ENCODE measurements at regions of chr16 and their contacts with region 1.

Region 1: DNA sequence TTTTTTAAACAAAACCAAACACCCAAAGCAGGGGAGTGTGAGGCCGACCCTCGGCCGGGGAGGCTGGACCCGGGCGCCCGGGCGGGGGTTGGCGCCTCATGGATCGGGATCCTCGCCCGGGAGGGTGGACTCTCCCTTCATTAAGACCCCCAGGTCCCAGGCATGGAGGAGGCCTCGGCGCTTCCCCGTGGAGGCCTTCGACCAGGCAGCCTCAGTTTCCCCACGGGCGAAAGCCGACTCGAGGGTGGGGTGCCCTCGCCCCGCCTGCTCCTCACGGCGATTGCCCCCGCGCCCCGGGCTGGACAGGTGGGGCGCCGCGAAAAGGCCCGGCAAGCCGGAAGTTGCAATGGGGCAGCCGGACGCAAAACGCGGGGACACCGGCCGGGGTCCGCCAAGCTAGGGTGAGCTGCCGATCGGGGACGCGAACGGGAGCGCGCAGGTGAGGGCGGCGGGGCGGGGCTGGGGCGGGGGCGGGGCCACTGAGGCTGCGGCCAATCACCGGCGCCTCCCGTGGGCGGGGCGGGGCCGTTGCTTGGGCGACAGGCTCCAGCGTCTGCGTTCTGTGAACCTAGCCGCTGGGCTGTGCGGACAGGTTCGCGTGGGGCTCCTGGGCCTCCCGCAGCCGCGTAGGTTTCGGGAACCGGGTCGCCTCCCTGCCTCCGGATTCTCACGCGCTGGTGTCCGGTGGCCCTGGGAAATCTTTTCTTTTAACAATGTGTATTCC is 6.0 kb upstream of the ZNF205 start:
- DNase-seq: peak; percentile 88
- H3K4me3 Mint-ChIP-seq: peak overlapping the region; percentile 85
- H3K27ac Mint-ChIP-seq: peak overlapping the region; percentile 95
- H3K4me1 Mint-ChIP-seq: peaks cover 22% of the 10 kb centered on the region
- H3K27me3 Mint-ChIP-seq: no peaks in the 10 kb centered on the region

Region 2: DNA sequence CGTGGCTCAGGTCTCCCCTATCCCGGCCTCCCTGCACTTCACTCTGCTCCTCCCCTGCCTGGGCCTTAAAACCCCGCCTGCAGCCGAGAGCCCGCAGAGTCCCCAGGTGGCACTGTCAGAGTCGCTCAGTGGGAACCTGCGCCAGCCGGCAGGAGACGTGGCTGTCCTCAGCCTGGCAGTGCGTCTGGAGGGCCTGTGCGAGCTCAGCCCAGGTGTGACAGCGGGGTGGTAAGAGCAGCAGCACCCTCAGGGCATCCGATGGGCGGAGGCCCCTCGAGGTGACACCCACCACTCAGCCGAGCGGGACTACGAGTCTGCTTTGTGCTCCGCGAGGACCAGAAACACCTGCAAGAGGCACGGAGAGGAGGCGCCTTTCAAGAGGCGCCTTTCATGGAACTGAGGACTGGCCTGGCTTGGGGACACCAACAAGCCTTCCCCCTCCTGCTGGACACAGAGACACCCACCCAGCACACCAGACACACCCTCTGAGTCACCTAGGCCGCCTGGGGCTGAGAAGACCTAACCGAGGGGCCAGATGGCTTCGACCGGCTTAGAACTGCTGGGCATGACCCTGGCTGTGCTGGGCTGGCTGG is 93.4 kb before region 1 on chr16 and contains the start of gene CLDN9:
- intact Hi-C with region 1: no loop called
- DNase-seq: no peak
- H3K4me3 Mint-ChIP-seq: no peak within 1 kb of the TSS
- H3K27ac Mint-ChIP-seq: no peak within 1 kb of the TSS
- H3K4me1 Mint-ChIP-seq: peaks cover 10% of the 10 kb centered on the region
- H3K27me3 Mint-ChIP-seq: peaks cover 11% of the 10 kb centered on the region
- total RNA-seq, gene CLDN9: not detected in 2 replicates

Region 3: GRCh38 chr16:3123986-3124886 is 17.9 kb after region 1 on chr16:
- intact Hi-C with region 1: loop called (anchors 1 kb)
- DNase-seq: peak; percentile 96
- H3K4me3 Mint-ChIP-seq: peak overlapping the region; percentile 97
- H3K27ac Mint-ChIP-seq: peak overlapping the region; percentile 93
- H3K4me1 Mint-ChIP-seq: peaks cover 42% of the 10 kb centered on the region
- H3K27me3 Mint-ChIP-seq: peaks cover 3% of the 10 kb centered on the region

Region 4: GRCh38 chr16:3129137-3130131 is 23.1 kb after region 1 on chr16:
- intact Hi-C with region 1: loop called (anchors 1 kb)
- DNase-seq: peak; percentile 81
- H3K4me3 Mint-ChIP-seq: peak overlapping the region; percentile 88
- H3K27ac Mint-ChIP-seq: peak overlapping the region; percentile 81
- H3K4me1 Mint-ChIP-seq: peaks cover 51% of the 10 kb centered on the region
- H3K27me3 Mint-ChIP-seq: no peaks in the 10 kb centered on the region

Measured in activated T-helper 1 cell treated with anti-CD3 and anti-CD28 coated beads, Interleukin-12 subunit alpha, Interleukin-12 subunit beta, Interleukin-2, Interleukin-4 antibody, amounts not matched to agents 30 ng/mL and 10 ng/mL and 1 ng/mL, durations not matched to agents 14 hours and 24 hours and 36 hours (primary cell).